Activated B cell treated with CpG ODN at 0.5 μM for 24 hours (primary cell): ENCODE measurements at regions of chr1 and their contacts with region 1.

Region 1: DNA sequence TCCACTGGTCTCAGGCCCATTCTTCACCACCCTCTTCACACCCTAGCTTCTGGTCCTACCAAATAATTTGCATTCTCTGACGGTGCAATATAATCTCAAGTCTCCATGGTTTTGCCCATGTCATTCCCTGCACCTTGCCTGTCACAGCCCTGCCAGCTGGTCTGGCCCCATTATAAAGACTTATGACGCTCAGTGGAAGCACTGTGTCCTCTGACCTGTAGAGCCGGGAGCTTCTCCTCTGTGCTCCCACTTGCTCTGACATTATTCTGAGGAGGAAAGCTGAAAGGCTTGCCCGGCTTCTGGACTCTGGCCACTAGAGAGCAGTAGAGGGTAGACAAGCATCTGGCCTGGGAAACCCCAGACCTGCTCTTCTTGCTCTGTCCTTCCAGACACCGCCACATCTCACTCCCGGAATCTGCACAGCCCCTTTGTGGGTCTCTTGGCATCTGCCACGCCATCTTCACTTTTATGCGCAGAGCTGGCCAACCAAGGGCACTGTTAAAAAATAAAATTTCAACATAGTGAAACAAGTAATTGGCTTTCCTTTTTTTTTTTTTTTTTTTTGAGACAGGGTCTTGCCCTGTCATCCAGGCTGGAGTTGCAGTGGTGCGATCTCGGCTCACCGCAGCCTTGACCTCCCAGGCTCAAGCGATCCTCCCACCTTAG is 44.4 kb downstream of the NENF start:
- DNase-seq: peak; percentile 52
- ATAC-seq: peak; percentile 97
- H3K4me3 Mint-ChIP-seq: no peak overlapping the region
- H3K27ac Mint-ChIP-seq: no peak overlapping the region
- H3K4me1 Mint-ChIP-seq: peaks cover 8% of the 10 kb centered on the region
- H3K27me3 Mint-ChIP-seq: peaks cover 19% of the 10 kb centered on the region
- CTCF ChIP-seq: peak; percentile 85

Region 2: GRCh38 chr1:212415107-212415841 is 61.9 kb before region 1 on chr1:
- CTCF ChIA-PET with region 1: no interaction called
- POLR2A ChIA-PET with region 1: no interaction called
- intact Hi-C with region 1: no loop called
- DNase-seq: no peak
- ATAC-seq: no peak
- H3K4me3 Mint-ChIP-seq: peak overlapping the region; percentile 100
- H3K27ac Mint-ChIP-seq: peak overlapping the region; percentile 96
- H3K4me1 Mint-ChIP-seq: peaks cover 43% of the 10 kb centered on the region
- H3K27me3 Mint-ChIP-seq: no peaks in the 10 kb centered on the region
- CTCF ChIP-seq: no peak

Region 3: DNA sequence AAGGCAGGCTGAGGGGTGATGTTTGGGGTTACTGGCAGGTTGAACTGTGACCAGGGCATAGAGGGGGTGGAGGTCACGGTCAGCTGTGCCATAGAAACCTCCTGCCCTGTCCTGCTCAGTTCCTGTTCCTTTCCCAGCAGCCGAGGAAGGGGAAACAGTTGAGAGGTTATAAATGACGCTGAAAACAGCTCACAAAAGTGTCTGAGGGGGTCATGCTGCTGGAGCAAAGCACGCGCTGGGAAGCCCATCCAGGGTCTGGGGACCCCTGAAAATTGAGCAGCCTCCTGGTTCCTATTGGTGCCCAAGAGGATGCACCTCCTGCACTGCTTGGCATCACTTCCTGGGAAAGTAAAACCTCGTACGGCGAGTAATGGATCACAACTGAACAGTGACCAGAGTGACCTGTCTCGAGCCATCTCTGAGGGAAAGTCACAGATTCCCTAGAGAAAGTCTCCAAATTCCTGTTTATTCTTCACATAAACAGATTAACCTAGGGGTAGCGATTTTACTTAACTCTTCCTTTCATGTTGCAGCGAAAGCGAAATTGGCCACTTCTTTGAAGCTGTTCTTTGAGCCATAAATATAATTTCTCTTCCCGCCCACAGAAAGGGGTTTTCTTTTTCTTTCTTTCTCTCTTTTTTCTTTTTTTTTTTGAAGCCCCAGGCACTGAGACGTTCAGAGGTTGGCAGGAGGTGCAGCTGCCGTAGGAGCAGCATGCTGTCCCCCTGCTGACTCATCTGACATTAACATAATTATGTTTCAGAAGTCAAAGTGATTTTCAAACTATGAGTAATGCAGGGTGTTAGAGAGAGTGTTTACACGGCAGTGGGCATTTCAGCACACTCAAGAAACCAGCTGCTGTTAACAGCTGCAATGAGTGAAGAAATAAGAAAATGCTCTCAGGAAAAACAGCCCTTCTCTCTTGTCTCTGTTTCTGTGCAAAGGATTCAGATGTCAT is 89.7 kb after region 1 on chr1:
- CTCF ChIA-PET with region 1: interaction called, 9 read pairs
- POLR2A ChIA-PET with region 1: interaction called, 8 read pairs
- intact Hi-C with region 1: loop called (anchors 1 kb)
- DNase-seq: no peak
- ATAC-seq: peak; percentile 98
- H3K4me3 Mint-ChIP-seq: peak overlapping the region; percentile 88
- H3K27ac Mint-ChIP-seq: peak overlapping the region; percentile 86
- H3K4me1 Mint-ChIP-seq: peaks cover 34% of the 10 kb centered on the region
- H3K27me3 Mint-ChIP-seq: no peaks in the 10 kb centered on the region
- CTCF ChIP-seq: no peak

Region 4: DNA sequence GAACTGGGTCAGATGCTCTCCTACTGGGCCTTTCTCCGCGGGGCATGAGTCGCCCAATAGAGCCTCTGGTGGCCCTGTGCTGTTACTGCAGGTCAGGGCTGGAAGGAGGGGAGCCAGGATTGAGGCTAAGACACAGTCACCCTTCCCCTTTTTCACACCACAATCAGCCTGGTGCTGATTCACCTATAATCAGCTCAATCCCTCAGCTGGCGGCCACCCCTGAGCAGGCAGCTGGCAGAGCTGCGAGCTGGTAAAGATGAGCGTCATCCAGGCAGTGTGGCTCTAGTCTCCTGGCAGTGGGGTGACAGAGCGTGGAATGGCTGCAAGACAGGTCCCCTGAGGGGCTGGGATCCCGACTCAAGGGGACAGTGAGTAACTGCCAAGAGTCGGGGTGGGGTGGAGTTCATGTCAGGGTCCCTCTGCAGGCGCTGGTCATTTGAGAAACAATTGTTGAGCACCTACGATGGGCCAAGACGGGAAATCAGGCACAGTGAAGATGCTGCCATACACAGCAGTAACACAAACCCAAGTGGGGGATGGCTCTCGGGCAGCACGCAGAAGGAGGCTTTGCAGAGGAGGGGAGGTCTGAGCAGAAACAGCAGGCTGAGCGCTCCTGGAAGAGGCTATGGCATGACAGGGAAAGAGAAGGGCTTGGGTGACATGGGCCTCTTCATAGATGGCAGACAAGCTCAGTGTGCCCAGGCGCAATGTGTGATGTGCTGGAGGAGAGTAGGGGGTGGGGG is 153.2 kb after region 1 on chr1:
- CTCF ChIA-PET with region 1: interaction called, 15 read pairs
- POLR2A ChIA-PET with region 1: no interaction called
- intact Hi-C with region 1: loop called (anchors 1 kb)
- DNase-seq: peak; percentile 58
- ATAC-seq: peak; percentile 98
- H3K4me3 Mint-ChIP-seq: no peak overlapping the region
- H3K27ac Mint-ChIP-seq: no peak overlapping the region
- H3K4me1 Mint-ChIP-seq: peaks cover 19% of the 10 kb centered on the region
- H3K27me3 Mint-ChIP-seq: peaks cover 12% of the 10 kb centered on the region
- CTCF ChIP-seq: peak; percentile 76

Region 5: GRCh38 chr1:212671342-212672031 is 194.3 kb after region 1 on chr1:
- CTCF ChIA-PET with region 1: interaction called, 12 read pairs
- POLR2A ChIA-PET with region 1: no interaction called
- intact Hi-C with region 1: no loop called
- DNase-seq: no peak
- ATAC-seq: peak; percentile 68
- H3K4me3 Mint-ChIP-seq: peak overlapping the region; percentile 12
- H3K27ac Mint-ChIP-seq: no peak overlapping the region
- H3K4me1 Mint-ChIP-seq: peaks cover 22% of the 10 kb centered on the region
- H3K27me3 Mint-ChIP-seq: peaks cover 4% of the 10 kb centered on the region
- CTCF ChIP-seq: no peak

Region 6: DNA sequence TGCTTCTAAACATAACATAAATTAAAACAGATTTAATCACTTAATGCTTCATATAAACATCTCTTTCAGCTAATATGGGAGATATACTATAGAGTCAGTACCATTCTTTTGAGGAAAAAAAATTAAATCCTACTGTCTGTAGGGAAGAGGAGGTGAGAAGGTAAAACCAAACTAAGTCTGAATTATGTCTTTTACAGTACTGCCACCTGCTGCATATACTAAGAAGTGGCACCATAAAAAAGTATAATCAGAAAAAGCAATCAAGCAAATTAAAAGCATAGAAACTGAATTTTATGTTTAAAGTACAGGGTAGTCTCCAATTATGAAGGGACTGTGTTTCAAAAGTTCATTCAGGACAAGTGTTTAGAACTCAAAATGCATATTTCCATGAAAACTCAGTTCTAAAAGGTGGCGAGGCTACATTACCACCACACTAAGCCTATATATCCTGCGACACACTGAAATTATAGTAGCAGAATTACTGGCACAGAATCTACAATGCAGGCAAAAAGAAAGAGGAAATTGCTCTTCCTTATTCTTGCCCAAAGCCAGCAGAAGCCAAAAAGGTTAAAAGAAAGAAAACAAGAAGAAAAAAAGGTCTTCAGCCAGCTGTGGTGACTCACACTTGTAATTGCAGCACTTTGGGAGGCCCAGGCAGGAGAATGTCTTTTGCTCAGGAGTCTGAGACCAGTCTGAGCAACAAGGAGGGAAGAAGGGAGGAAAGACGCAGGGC is 305.4 kb after region 1 on chr1:
- CTCF ChIA-PET with region 1: interaction called, 40 read pairs
- POLR2A ChIA-PET with region 1: no interaction called
- intact Hi-C with region 1: loop called (anchors 1 kb)
- DNase-seq: no peak
- ATAC-seq: peak; percentile 66
- H3K4me3 Mint-ChIP-seq: no peak overlapping the region
- H3K27ac Mint-ChIP-seq: no peak overlapping the region
- H3K4me1 Mint-ChIP-seq: peaks cover 2% of the 10 kb centered on the region
- H3K27me3 Mint-ChIP-seq: no peaks in the 10 kb centered on the region
- CTCF ChIP-seq: peak; percentile 80

Region 7: GRCh38 chr1:213003256-213003655 is 526.1 kb after region 1 on chr1:
- CTCF ChIA-PET with region 1: interaction called, 15 read pairs
- POLR2A ChIA-PET with region 1: no interaction called
- intact Hi-C with region 1: no loop called
- DNase-seq: no peak
- ATAC-seq: no peak
- H3K4me3 Mint-ChIP-seq: no peak overlapping the region
- H3K27ac Mint-ChIP-seq: no peak overlapping the region
- H3K4me1 Mint-ChIP-seq: peaks cover 2% of the 10 kb centered on the region
- H3K27me3 Mint-ChIP-seq: no peaks in the 10 kb centered on the region
- CTCF ChIP-seq: no peak